Heart right ventricle (tissue), 16 donors: ENCODE measurements at regions of chr22 and their contacts with region 1.

Region 1: DNA sequence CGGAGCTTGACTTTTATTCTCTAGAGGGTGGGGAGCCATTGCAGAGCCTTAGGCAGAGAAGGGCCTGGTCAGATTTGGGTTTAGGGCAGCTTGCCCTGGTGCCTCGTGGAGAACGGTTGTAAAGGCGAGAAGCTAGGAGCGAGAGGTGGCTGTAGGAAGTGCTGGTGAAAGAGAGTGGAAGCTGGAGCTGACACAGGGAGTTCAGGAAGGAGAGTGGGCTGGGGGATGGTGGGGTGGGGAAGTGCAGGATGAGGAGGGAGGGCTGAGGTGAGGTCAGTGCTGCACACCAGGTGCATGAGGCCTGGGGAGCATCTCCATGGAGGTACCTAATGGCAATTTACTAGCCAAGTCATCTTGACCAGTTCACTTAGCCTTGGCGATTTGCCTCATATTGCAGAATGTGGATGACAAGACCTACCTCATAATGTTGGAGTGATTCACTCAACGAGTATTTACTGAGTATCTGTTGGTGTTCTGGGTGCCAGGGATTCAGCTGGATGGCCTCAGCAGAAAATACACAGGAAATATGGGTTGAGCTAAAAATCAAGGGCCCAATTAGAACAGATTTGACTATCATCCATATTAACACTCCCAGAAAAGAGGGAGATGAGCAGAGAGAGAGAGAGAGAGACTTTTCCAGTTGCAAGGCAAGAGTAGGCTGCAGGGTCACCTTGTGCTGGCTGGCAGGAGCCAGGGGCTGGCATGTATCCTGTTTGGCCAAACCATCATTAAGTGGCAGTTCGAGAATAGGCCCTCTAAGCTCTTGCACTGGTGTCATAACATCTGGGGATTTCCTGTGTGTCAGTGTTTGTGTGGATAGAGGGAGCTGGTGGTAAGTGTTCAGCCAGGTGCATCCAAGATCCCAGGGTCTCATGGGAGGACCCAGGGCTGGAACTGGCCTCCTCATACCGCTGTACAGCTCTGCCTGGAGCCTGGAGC is 44.4 kb upstream of the CLDN5 start:
- DNase-seq: peak; percentile 19 to 37
- ATAC-seq: peak in 4 of 8 donors; percentile 24 to 43 (median 38)
- H3K4me3 ChIP-seq: no peak overlapping the region
- H3K27ac ChIP-seq: peak overlapping the region in 8 of 10 donors; percentile 26 to 89 (median 78)
- H3K4me1 ChIP-seq: peaks cover 7 to 59% (median 35%) of the 10 kb centered on the region in 9 donors
- H3K27me3 ChIP-seq: no peaks in the 10 kb centered on the region
- CTCF ChIP-seq: no peak

Region 2: DNA sequence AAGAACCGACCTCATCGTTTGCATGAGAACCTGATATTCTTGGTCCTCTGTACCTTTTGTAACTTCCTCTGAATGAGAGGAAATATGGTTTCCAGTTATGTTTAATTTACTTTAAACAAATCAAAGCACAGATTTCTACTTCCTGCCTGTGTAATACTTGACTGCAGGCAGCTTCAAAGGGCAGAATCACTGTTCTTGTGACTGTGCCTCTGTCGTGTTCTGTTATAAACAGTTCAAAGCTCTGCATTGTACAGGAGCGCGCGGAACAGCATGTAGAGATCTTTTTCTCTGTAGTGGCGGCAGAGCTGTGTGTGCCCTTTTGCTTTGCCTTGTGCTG is 28.8 kb after region 1 on chr22:
- intact Hi-C with region 1: loop called in 1 of 10 experiments (anchors 2 kb)
- DNase-seq: no peak
- ATAC-seq: peak in 3 of 8 donors; percentile 28 to 45 (median 43)
- H3K4me3 ChIP-seq: no peak overlapping the region
- H3K27ac ChIP-seq: peak overlapping the region in 2 of 10 donors; percentile 1 to 60
- H3K4me1 ChIP-seq: peaks cover 0 to 30% (median 15%) of the 10 kb centered on the region in 9 donors
- H3K27me3 ChIP-seq: peaks cover 0 to 3% (median 0%) of the 10 kb centered on the region in 7 donors
- CTCF ChIP-seq: no peak